Dorsolateral prefrontal cortex (tissue), 120 donors: ENCODE measurements at regions of chr1 and their contacts with region 1.

Region 1: GRCh38 chr1:156146020-156146768 is 7.2 kb upstream of the SEMA4A start:
- DNase-seq: peak in 7 of 10 donors; percentile 29 to 65 (median 56)
- H3K4me3 ChIP-seq: peak overlapping the region in 54 of 59 donors; percentile 0 to 56 (median 30)
- H3K27ac ChIP-seq: peak overlapping the region in 54 of 59 donors; percentile 2 to 84 (median 66)
- H3K27me3 ChIP-seq: no peaks in the 10 kb centered on the region
- CTCF ChIP-seq: peak; percentile 51 to 91 (median 78)

Region 2: DNA sequence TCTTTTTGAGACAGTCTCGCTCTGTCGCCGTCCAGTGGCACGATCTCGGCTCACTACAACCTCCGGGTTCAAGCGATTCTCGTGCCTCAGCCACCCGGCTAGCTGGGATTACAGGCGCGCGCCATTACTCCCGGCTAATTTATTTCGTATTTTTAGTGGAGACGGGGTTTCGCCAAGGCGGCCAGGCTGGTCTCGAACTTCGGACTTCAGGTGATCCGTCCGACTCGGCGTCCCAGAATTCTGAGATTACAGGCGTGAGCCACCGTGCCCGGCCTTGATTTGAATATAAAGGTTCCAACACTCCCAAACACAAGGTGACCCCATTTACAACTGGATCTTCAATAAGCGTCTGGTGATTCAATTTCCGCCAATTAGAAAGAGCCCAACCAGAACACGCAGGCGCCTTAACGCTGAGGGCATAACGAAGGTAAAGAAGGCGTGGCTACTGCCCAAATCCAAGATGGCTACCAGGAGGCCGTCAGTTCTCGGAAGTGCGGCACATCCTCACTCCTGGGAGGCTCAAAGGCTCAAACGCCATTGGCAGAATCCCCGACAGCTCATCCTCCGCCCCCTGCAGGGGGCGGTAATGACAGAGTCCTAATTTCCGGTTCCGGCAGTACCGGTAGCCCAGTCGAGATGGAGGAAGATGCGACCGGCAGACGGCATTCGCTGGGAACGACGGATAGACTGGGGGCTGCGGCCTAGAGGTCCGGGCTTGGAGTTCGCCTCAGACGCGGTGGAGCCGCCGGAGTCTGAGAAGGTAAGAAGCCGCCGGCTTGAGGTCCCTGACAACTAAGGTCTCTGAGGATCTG is 47.5 kb after region 1 on chr1 and contains the start of gene SLC25A44:
- intact Hi-C with region 1: loop called (anchors 5 kb)
- DNase-seq: peak; percentile 90 to 98 (median 97)
- H3K4me3 ChIP-seq: peak within 1 kb of the TSS; percentile 69 to 100 (median 96)
- H3K27ac ChIP-seq: peak within 1 kb of the TSS in 58 of 59 donors; percentile 45 to 99 (median 87)
- H3K27me3 ChIP-seq: no peaks in the 10 kb centered on the region
- CTCF ChIP-seq: peak; percentile 41 to 92 (median 75)
- total RNA-seq, gene SLC25A44: 30.5 to 80.5 (median 49.8) TPM

Region 3: GRCh38 chr1:156226116-156226538 is 79.9 kb after region 1 on chr1:
- intact Hi-C with region 1: loop called (anchors 1 kb)
- DNase-seq: no peak
- H3K4me3 ChIP-seq: no peak overlapping the region
- H3K27ac ChIP-seq: peak overlapping the region; percentile 2 to 98 (median 87)
- H3K27me3 ChIP-seq: no peaks in the 10 kb centered on the region
- CTCF ChIP-seq: no peak

Region 4: DNA sequence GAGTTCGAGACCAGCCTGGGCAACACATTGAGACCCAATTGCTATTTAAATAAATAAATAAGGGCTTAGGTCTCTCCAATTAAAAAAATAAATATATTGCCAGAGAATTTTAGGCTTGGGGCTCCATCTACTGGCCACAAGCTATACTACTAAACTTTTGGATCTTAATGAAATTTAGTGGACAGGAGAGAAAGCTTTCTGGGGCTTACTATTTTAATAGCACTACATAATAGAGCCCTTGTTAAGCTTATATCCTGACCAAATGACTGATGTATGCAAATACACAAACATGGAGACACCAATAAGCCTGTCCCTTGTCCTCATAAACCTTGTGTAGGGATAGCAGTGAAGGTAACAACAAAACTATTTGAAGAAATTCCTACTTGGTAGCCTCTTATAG is 173.5 kb after region 1 on chr1:
- intact Hi-C with region 1: loop called in 1 of 2 experiments (anchors 10 kb)
- DNase-seq: no peak
- H3K4me3 ChIP-seq: no peak overlapping the region
- H3K27ac ChIP-seq: no peak overlapping the region
- H3K27me3 ChIP-seq: no peaks in the 10 kb centered on the region
- CTCF ChIP-seq: peak; percentile 30 to 72 (median 58)

Region 5: DNA sequence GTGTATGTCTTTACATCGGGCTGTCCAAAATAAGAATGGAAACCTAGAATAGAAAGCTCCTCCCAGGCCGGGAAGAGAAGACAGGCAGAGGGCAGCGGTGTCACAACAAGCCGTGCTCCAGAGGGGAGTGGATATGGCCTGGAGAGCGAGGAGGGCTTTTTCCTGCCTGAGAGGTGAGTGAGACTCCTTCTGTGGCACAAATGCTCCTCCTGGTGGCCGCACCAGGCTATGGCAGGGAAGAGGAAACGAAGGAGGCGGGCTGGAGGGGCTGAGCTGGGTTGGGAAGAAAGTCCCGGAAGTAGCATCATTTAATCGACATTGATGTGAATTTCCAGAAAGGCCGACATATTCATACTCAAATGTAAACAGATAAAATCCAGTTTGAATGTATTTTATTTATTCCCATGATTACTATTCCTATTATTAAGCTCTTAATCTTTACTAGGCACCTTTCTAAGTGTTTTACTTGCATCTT is 299.6 kb after region 1 on chr1:
- intact Hi-C with region 1: loop called in 1 of 2 experiments (anchors 10 kb)
- DNase-seq: peak; percentile 78 to 90 (median 85)
- H3K4me3 ChIP-seq: peak overlapping the region in 23 of 59 donors; percentile 0 to 43 (median 27)
- H3K27ac ChIP-seq: peak overlapping the region in 7 of 59 donors; percentile 0 to 55 (median 34)
- H3K27me3 ChIP-seq: peaks cover 0 to 11% (median 0%) of the 10 kb centered on the region in 45 donors
- CTCF ChIP-seq: peak; percentile 83 to 100 (median 98)